ENCODE measurements at regions of chr3 and their contacts with region 1.

Region 1: GRCh38 chr3:156050918-156051317 is 69.5 kb upstream of the KCNAB1 start:
- DNase-seq: no peak
- H3K4me3 ChIP-seq: no peak overlapping the region
- H3K27ac ChIP-seq: no peak overlapping the region
- H3K4me1 ChIP-seq: no peaks in the 10 kb centered on the region
- H3K27me3 ChIP-seq: peaks cover 6% of the 10 kb centered on the region
- CTCF ChIP-seq: no peak

Region 2: GRCh38 chr3:156109989-156110388 is 59.1 kb after region 1 on chr3:
- intact Hi-C with region 1: loop called (anchors 2 kb)
- DNase-seq: no peak
- H3K4me3 ChIP-seq: no peak overlapping the region
- H3K27ac ChIP-seq: no peak overlapping the region
- H3K4me1 ChIP-seq: peaks cover 14% of the 10 kb centered on the region
- H3K27me3 ChIP-seq: no peaks in the 10 kb centered on the region
- CTCF ChIP-seq: no peak

Measured in left ventricle myocardium inferior (tissue), 1 donor.